GM13977 (cell line): ENCODE measurements at regions of chr14 and their contacts with region 1.

Region 1: DNA sequence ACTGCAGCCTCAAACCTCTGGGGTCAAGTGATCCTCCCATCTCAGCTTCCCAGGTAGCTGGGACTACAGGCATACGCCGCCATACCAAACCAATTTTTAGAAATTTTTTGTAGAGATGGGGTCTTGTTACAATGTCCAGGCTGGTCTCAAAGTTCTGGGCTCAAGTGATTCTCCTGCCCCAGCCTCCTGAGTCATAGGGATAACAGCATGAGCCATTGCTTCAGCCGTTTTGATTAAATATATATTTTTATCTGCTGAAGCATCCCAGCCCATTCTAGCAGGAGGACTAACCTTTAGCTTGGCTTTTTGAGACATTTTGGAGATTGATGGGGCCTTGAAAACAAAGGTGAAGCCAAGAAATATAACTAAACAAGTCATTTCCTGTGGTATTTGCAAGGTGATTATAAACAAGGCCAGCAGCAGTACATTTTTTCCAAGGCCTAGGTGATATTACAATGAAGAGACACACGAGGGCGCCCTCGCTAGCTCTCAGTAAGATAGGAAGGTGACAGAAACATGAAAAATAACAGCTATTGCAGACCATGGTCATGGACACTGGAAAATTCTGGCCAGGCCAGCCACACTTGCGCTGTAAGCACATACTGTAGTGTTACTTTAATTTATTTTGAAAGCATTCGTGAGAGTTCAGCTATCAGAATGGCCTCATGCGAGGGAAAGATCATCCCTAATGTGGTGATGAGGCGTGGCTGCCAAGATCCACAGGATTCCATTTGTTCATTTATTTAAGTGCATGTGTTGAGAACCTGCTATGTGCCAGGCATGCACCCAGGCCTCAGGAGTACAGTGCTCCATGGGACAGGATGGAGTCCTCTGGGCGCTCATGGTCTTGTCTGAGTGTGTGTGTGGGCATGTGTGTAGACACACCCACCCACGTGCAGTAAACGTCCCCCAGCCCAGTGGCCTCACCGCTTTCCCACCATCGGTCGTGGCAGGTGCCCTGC is 63.5 kb downstream of the DGLUCY start:
- DNase-seq: peak; percentile 73
- CTCF ChIP-seq: peak; percentile 74

Region 2: GRCh38 chr14:90903101-90903500 is 274.3 kb before region 1 on chr14:
- in situ Hi-C with region 1: loop called (anchors 5 kb)
- DNase-seq: peak; percentile 68
- CTCF ChIP-seq: peak; percentile 76

Region 3: GRCh38 chr14:91286530-91286937 is 109.2 kb after region 1 on chr14:
- in situ Hi-C with region 1: loop called (anchors 10 kb)
- DNase-seq: peak; percentile 85
- CTCF ChIP-seq: peak; percentile 83

Region 4: GRCh38 chr14:91420686-91421085 is 243.3 kb after region 1 on chr14:
- in situ Hi-C with region 1: loop called (anchors 25 kb)
- DNase-seq: no peak
- CTCF ChIP-seq: no peak

Region 5: GRCh38 chr14:91714805-91715204 is 537.5 kb after region 1 on chr14:
- in situ Hi-C with region 1: no loop called
- DNase-seq: no peak
- CTCF ChIP-seq: no peak